Sciatic nerve (tissue), 2 donors: ENCODE measurements at regions of chr17 and their contacts with region 1.

Region 1: GRCh38 chr17:81094509-81095382 is 59.8 kb downstream of the BAIAP2 start:
- DNase-seq: peak; percentile 90
- ATAC-seq: peak; percentile 74

Region 2: GRCh38 chr17:80991645-80992076 is 103.1 kb before region 1 on chr17 and contains the start of gene CHMP6:
- intact Hi-C with region 1: loop called (anchors 5 kb)
- DNase-seq: peak; percentile 86
- ATAC-seq: peak; percentile 44
- total RNA-seq, gene CHMP6: 26.8 TPM

Region 3: GRCh38 chr17:81034779-81035388 is 59.9 kb before region 1 on chr17 and contains the start of gene BAIAP2:
- intact Hi-C with region 1: loop called (anchors 5 kb)
- DNase-seq: peak; percentile 99
- ATAC-seq: peak; percentile 85
- total RNA-seq, gene BAIAP2: 50.9 TPM